Left colon (tissue), 2 donors: ENCODE measurements at regions of chr2 and their contacts with region 1.

Region 1: DNA sequence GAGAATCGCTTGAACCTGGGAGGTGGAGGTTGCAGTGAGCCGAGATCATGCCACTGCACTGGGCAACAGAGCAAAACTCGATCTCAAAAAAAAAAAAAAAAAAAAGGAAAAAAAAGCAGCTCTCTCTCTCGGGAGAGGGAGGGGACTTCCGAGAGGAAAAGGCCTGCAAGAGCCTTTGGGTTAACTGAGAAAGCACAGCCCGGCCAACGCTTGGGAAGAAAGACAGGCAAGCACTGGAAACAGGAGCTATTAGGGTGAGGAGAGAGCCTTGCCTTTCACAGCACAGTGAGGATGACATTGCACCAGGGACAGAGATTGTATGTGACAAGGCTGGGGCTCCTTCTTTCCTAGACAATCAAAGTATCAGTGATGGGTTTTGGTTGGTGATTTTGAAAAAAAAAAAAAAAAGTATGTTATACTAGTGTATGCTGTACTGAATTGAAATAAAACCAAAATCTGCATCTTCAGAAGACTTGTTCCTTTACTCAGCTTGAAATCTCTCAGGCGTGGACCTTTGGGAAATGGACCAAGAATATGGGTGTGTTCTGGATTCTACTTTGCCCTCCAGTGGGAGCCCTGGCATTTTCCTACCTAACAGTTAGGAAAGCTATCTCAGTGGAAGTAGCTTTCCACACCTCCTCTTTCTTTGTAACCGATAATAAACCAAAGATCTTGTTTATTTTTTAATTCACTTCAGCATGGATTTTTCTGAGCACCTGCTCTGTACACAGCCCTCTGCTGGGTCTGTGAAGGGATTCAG is 16.7 kb downstream of the SRSF7 start:
- DNase-seq: no peak
- ATAC-seq: peak; percentile 63

Region 2: GRCh38 chr2:38315707-38316333 is 418.7 kb before region 1 on chr2:
- intact Hi-C with region 1: loop called in 1 of 2 experiments (anchors 10 kb)
- DNase-seq: no peak
- ATAC-seq: peak; percentile 64